ENCODE measurements at regions of chr12 and their contacts with region 1.

Region 1: GRCh38 chr12:120317224-120318105 is 10.1 kb downstream of the PLA2G1B start:
- DNase-seq: peak; percentile 99 to 100 (median 99)
- H3K4me3 ChIP-seq: peak overlapping the region; percentile 53
- H3K27ac ChIP-seq: peak overlapping the region; percentile 51 to 80
- H3K4me1 ChIP-seq: no peaks in the 10 kb centered on the region
- H3K27me3 ChIP-seq: no peaks in the 10 kb centered on the region
- CTCF ChIP-seq: peak; percentile 43 to 94 (median 87)
- EP300 ChIP-seq: no peak
- POLR2A ChIP-seq: peak; percentile 95

Region 2: GRCh38 chr12:120249875-120250795 is 67.3 kb before region 1 on chr12:
- intact Hi-C with region 1: loop called in 1 of 4 experiments (anchors 1 kb)
- DNase-seq: no peak
- H3K4me3 ChIP-seq: no peak overlapping the region
- H3K27ac ChIP-seq: no peak overlapping the region
- H3K4me1 ChIP-seq: peaks cover 8% of the 10 kb centered on the region
- H3K27me3 ChIP-seq: no peaks in the 10 kb centered on the region
- CTCF ChIP-seq: no peak
- EP300 ChIP-seq: no peak
- POLR2A ChIP-seq: no peak